ENCODE measurements at regions of chr3 and their contacts with region 1.

Region 1: GRCh38 chr3:11155341-11156025 is 1.2 kb downstream of the HRH1 start:
- DNase-seq: peak; percentile 73
- H3K4me3 ChIP-seq: peak overlapping the region; percentile 44 to 60 (median 58)
- H3K27ac ChIP-seq: no peak overlapping the region
- H3K4me1 ChIP-seq: peaks cover 9% of the 10 kb centered on the region
- H3K27me3 ChIP-seq: no peaks in the 10 kb centered on the region
- CTCF ChIP-seq: peak; percentile 88 to 95

Region 2: DNA sequence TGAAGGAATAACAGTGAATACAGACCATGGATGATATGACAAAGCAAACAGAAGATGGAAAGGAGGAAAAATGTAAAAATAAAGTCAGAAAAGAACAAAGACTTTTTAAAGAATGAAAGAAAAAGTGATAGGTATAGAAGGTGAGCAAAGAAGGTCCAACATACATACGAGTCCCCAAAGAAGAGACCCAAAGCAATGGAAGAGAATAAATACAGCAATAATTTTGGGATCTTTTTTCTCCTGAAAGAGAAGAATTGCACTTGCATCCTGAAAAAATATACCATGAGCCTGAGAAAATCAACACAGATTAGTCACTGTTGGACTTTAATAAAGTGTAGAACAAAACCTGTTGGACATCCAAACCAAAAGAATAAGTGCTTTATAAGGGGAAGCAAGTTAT is 248.2 kb before region 1 on chr3:
- CTCF ChIA-PET with region 1: no interaction called
- dilution Hi-C with region 1: no loop called
- in situ Hi-C with region 1: no loop called
- intact Hi-C with region 1: no loop called
- DNase-seq: no peak
- H3K4me3 ChIP-seq: no peak overlapping the region
- H3K27ac ChIP-seq: no peak overlapping the region
- H3K4me1 ChIP-seq: peaks cover 11% of the 10 kb centered on the region
- H3K27me3 ChIP-seq: no peaks in the 10 kb centered on the region
- CTCF ChIP-seq: no peak

Region 3: DNA sequence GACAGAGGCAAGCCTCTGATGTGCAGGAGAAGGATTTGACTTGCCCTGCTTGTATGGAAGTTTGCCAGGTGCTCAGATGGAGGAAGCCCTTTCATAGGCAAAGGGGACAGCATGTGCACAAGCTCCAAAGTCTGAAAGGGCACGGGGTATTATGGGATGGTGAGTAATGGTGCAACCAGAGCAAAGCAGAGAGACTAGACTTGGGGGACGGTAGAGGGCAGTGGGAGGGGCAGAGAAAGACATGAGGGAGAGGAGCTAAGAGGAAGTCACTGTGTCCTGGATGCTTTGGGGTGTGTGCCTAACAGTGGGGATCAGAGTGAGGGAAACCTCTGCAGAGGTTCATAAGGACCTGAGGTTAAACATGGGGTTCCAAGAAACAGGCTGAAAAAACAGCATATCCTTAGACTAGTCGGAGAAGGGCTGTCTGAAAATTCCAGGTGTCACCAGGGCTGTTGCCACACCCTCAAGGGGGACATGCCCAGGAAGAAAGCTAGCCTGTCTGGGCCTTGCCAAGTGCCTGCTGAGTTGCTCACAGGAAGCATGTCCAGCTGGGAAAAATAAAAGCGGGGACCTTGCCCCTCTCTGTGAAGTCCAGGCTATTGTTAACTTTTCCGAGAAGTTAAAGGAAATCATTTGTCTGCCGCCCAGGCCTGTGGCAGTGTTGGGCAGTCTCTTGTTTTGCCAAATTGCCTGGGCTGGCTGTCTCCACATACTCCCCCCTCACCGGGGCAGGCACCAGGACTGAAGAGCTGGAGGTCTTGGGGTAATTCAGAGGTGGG is 46.0 kb after region 1 on chr3:
- CTCF ChIA-PET with region 1: interaction called, 14 read pairs
- dilution Hi-C with region 1: no loop called
- in situ Hi-C with region 1: no loop called
- intact Hi-C with region 1: loop called (anchors 1 kb)
- DNase-seq: peak; percentile 26
- H3K4me3 ChIP-seq: no peak overlapping the region
- H3K27ac ChIP-seq: no peak overlapping the region
- H3K4me1 ChIP-seq: peaks cover 24% of the 10 kb centered on the region
- H3K27me3 ChIP-seq: no peaks in the 10 kb centered on the region
- CTCF ChIP-seq: no peak

Region 4: DNA sequence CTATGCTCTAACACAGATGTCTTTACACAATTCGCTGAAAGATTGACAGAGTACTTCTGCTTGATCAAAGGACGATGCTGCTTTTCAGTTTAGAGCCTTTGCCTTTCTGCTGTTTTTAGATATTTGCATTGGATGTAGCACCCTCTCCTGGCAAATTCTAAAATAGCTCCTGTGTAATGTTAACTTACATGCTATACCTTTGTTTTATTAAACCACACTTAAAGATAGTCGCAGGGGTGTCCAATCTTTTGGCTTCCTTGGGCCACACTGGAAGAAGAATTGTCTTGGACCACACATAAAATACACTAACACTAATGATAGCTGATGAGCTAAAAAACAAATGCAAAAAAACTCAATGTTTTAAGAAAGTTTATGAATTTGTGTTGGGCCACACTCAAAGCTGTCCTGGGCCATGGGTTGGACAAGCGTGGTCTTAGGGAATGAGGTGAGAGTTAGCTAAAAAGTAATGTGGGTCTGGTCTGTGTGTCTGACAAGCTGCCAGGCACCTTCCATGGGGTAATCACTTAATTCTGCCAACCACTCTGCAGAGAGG is 179.6 kb after region 1 on chr3:
- CTCF ChIA-PET with region 1: interaction called, 3 read pairs
- dilution Hi-C with region 1: no loop called
- in situ Hi-C with region 1: no loop called
- intact Hi-C with region 1: loop called (anchors 1 kb)
- DNase-seq: peak; percentile 62
- H3K4me3 ChIP-seq: no peak overlapping the region
- H3K27ac ChIP-seq: no peak overlapping the region
- H3K4me1 ChIP-seq: peaks cover 3% of the 10 kb centered on the region
- H3K27me3 ChIP-seq: no peaks in the 10 kb centered on the region
- CTCF ChIP-seq: peak; percentile 63 to 70

Measured in mammary epithelial cell (primary cell).